ENCODE measurements at regions of chr1 and their contacts with region 1.

Region 1: GRCh38 chr1:2314803-2315673 is 76.3 kb downstream of the MORN1 start:
- DNase-seq: no peak
- H3K4me3 ChIP-seq: peak overlapping the region; percentile 52
- H3K27ac ChIP-seq: peak overlapping the region; percentile 47
- H3K27me3 ChIP-seq: no peaks in the 10 kb centered on the region
- CTCF ChIP-seq: peak; percentile 55

Region 2: DNA sequence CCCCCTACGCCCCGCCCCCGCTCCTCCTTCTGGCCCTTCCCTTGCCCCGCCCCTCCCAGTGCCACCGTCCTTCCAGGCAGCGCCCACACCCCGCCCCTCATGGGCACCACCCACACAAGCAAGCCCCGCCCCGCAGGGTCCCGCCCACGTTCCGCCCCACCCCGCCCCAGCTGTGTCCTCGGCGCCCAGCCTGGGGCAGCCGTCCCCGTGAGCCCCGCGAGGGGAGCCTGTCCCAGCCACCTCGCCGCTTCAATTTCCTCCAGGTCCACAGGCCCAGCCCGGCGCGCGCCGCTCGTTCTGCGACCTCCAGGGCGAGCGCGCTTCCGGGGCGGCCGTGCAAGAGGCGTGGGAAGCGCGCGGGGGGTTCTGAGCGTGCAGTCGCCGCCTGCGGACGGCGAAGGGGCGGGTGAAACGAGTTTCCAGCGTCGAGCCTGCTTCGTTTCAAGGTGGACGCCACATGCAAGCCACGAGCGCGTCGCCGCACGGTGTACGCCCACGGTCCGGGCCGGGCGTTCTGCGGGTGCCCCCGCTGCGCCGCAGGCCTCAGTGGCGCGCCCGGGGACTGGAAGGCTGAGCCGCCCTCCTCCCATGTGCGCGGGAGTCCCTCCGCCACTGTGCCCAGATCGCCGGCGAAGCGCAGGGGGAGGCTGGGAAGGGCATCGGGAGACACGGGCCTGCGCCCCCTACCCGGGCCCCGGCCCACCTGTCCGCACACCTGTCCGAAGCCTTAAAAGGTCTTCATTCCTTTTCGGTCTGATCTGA is 109.7 kb before region 1 on chr1:
- CTCF ChIA-PET with region 1: no interaction called
- POLR2A ChIA-PET with region 1: no interaction called
- DNase-seq: peak; percentile 81
- H3K4me3 ChIP-seq: peak overlapping the region; percentile 50
- H3K27ac ChIP-seq: no peak overlapping the region
- H3K27me3 ChIP-seq: no peaks in the 10 kb centered on the region
- CTCF ChIP-seq: no peak

Region 3: GRCh38 chr1:2233997-2234761 is 80.9 kb before region 1 on chr1:
- CTCF ChIA-PET with region 1: interaction called, 12 read pairs
- POLR2A ChIA-PET with region 1: interaction called, 7 read pairs
- DNase-seq: peak; percentile 61
- H3K4me3 ChIP-seq: peak overlapping the region; percentile 87
- H3K27ac ChIP-seq: no peak overlapping the region
- H3K27me3 ChIP-seq: no peaks in the 10 kb centered on the region
- CTCF ChIP-seq: no peak

Region 4: DNA sequence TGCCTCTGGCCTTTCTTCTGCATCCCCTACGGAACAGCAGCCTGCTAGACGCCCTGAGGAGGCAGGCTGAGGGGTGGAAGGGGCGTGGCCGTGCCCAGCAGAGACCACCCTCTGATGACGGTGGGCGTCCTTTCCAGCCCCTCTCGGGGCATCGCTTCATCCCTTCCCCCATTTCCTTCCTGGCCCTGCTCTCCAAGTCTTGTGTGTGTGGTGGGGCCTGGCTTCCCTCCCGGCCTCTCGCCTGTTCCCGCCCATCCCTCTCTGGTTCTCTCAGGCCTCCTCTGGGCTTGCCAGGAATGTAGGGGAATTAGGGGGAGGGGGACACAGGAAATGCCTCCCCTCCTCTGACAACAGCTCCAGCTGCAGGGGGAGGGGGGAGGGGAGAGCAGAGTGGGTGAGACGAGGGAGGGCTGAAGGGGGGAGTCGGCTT is 35.8 kb before region 1 on chr1:
- CTCF ChIA-PET with region 1: no interaction called
- POLR2A ChIA-PET with region 1: no interaction called
- DNase-seq: peak; percentile 72
- H3K4me3 ChIP-seq: peak overlapping the region; percentile 20; the same call in 1 of the 2 replicates
- H3K27ac ChIP-seq: peak overlapping the region; percentile 70
- H3K27me3 ChIP-seq: no peaks in the 10 kb centered on the region
- CTCF ChIP-seq: no peak

Region 5: GRCh38 chr1:2300851-2301606 is 14.0 kb before region 1 on chr1:
- CTCF ChIA-PET with region 1: interaction called, 11 read pairs
- POLR2A ChIA-PET with region 1: no interaction called
- DNase-seq: no peak
- H3K4me3 ChIP-seq: no peak overlapping the region
- H3K27ac ChIP-seq: peak overlapping the region; percentile 40
- H3K27me3 ChIP-seq: no peaks in the 10 kb centered on the region
- CTCF ChIP-seq: no peak

Measured in AG04450 (cell line).